Activated CD8-positive, alpha-beta T cell treated with anti-CD3 and anti-CD28 coated beads for 36 hours (primary cell): ENCODE measurements at regions of chr4 and their contacts with region 1.

Region 1: GRCh38 chr4:1167247-1167949 is 5.0 kb downstream of the SPON2 start:
- DNase-seq: peak; percentile 97
- ATAC-seq: peak; percentile 92
- H3K4me3 Mint-ChIP-seq: peak overlapping the region; percentile 76
- H3K27ac Mint-ChIP-seq: peak overlapping the region; percentile 83
- H3K4me1 Mint-ChIP-seq: peaks cover 33% of the 10 kb centered on the region
- H3K27me3 Mint-ChIP-seq: peaks cover 13% of the 10 kb centered on the region
- CTCF ChIP-seq: peak; percentile 96

Region 2: GRCh38 chr4:880684-881405 is 286.6 kb before region 1 on chr4:
- CTCF ChIA-PET with region 1: no interaction called
- POLR2A ChIA-PET with region 1: no interaction called
- intact Hi-C with region 1: no loop called
- DNase-seq: no peak
- ATAC-seq: no peak
- H3K4me3 Mint-ChIP-seq: no peak overlapping the region
- H3K27ac Mint-ChIP-seq: peak overlapping the region; percentile 99
- H3K4me1 Mint-ChIP-seq: peaks cover 26% of the 10 kb centered on the region
- H3K27me3 Mint-ChIP-seq: no peaks in the 10 kb centered on the region
- CTCF ChIP-seq: no peak

Region 3: GRCh38 chr4:1012134-1012739 is 155.2 kb before region 1 on chr4:
- CTCF ChIA-PET with region 1: no interaction called
- POLR2A ChIA-PET with region 1: no interaction called
- intact Hi-C with region 1: no loop called
- DNase-seq: peak; percentile 48
- ATAC-seq: no peak
- H3K4me3 Mint-ChIP-seq: peak overlapping the region; percentile 52
- H3K27ac Mint-ChIP-seq: no peak overlapping the region
- H3K4me1 Mint-ChIP-seq: peaks cover 8% of the 10 kb centered on the region
- H3K27me3 Mint-ChIP-seq: peaks cover 17% of the 10 kb centered on the region
- CTCF ChIP-seq: no peak

Region 4: GRCh38 chr4:1026115-1026514 is 141.3 kb before region 1 on chr4:
- CTCF ChIA-PET with region 1: no interaction called
- POLR2A ChIA-PET with region 1: no interaction called
- intact Hi-C with region 1: no loop called
- DNase-seq: peak; percentile 70
- ATAC-seq: peak; percentile 92
- H3K4me3 Mint-ChIP-seq: no peak overlapping the region
- H3K27ac Mint-ChIP-seq: no peak overlapping the region
- H3K4me1 Mint-ChIP-seq: peaks cover 6% of the 10 kb centered on the region
- H3K27me3 Mint-ChIP-seq: no peaks in the 10 kb centered on the region
- CTCF ChIP-seq: no peak

Region 5: GRCh38 chr4:1154523-1155182 is 12.7 kb before region 1 on chr4:
- CTCF ChIA-PET with region 1: interaction called, 17 read pairs
- POLR2A ChIA-PET with region 1: interaction called, 5 read pairs
- intact Hi-C with region 1: no loop called
- DNase-seq: no peak
- ATAC-seq: no peak
- H3K4me3 Mint-ChIP-seq: no peak overlapping the region
- H3K27ac Mint-ChIP-seq: no peak overlapping the region
- H3K4me1 Mint-ChIP-seq: no peaks in the 10 kb centered on the region
- H3K27me3 Mint-ChIP-seq: peaks cover 4% of the 10 kb centered on the region
- CTCF ChIP-seq: no peak